H1 (cell line): ENCODE measurements at regions of chr9 and their contacts with region 1.

Region 1: DNA sequence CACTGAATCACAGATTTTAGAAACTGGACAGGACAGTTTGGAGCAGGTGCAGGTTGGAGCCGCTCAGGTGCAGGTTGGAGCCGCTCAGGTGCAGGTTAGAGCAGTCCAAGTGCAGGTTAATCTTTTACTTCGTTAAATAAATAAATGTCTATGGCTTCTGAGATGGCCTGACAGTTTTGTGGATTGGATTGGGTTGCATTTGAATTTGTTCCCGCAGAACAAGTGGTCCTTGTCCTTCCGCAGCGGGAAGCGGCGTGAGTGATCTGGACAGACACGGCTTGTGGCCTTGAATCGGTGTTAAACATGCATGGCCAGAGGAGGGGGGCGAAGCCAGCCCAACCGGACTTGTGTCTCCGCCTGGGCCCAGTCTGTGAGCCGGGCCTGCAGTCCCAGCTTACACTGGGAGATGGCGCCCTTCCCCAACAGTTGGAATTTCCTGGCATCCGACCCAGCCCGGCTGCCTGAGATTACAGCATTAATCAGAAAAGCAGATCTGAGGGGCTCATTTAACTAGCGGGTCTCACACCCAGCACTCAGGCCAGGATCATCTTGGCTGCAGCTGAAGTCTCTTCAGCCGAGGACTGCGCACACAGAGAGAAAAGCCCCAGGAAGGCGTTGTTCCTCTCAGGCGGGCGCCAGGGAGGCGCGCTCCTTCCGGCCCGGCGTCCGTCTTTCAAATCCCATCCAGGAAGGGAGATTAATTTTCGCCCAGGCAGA is 1.5 kb upstream of the OLFM1 start:
- DNase-seq: peak; percentile 65 to 98
- H3K4me3 ChIP-seq: peak overlapping the region in 3 of 4 experiments; percentile 1 to 57 (median 3); a peak in 4 of 8 replicates
- H3K27ac ChIP-seq: no peak overlapping the region
- H3K4me1 ChIP-seq: peaks cover 0 to 23% (median 6%) of the 10 kb centered on the region in 4 experiments; a peak in 5 of 7 replicates
- H3K27me3 ChIP-seq: peaks cover 0 to 17% (median 12%) of the 10 kb centered on the region in 4 experiments; a peak in 5 of 7 replicates
- CTCF ChIP-seq: peak; percentile 93 to 98 (median 97)
- EP300 ChIP-seq: 0 out of 3 replicates have a peak, but pooled peaks of 1 of the 2 experiments have one; percentile 27
- POLR2A ChIP-seq: no peak
- RAD21 ChIP-seq: peak; percentile 99 to 100

Region 2: DNA sequence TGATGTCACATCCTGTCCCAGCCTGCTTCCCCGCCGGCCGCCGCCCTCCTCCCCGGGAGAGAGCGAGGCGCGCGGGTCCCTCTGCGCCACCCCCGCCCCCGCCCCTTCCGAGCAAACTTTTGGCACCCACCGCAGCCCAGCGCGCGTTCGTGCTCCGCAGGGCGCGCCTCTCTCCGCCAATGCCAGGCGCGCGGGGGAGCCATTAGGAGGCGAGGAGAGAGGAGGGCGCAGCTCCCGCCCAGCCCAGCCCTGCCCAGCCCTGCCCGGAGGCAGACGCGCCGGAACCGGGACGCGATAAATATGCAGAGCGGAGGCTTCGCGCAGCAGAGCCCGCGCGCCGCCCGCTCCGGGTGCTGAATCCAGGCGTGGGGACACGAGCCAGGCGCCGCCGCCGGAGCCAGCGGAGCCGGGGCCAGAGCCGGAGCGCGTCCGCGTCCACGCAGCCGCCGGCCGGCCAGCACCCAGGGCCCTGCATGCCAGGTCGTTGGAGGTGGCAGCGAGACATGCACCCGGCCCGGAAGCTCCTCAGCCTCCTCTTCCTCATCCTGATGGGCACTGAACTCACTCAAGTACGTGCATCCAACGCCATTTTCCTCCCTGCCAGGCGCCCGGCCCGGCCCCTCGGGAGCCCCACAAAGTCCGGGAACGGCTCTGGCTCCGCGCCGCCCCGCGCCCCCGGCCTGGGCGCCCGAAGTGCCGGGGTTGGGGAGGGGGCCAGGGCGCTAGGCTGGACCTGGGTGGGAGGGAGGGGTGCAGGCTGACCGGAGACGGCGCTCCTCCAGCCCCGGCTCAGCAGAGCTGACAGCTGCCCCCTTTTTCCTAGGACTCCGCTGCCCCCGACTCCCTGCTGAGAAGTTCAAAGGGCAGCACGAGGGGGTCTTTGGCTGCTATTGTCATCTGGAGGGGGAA is 10.5 kb before region 1 on chr9:
- CTCF ChIA-PET with region 1: interaction called, 16 read pairs
- POLR2A ChIA-PET with region 1: no interaction called
- DNase-seq: peak in 1 of 2 experiments; percentile 68
- H3K4me3 ChIP-seq: peak overlapping the region; percentile 52 to 85 (median 54)
- H3K27ac ChIP-seq: no peak overlapping the region
- H3K4me1 ChIP-seq: peaks cover 0 to 10% (median 8%) of the 10 kb centered on the region in 4 experiments; a peak in 6 of 7 replicates
- H3K27me3 ChIP-seq: peaks cover 0 to 20% (median 17%) of the 10 kb centered on the region in 4 experiments; a peak in 6 of 7 replicates
- CTCF ChIP-seq: no peak
- EP300 ChIP-seq: no peak
- POLR2A ChIP-seq: no peak
- RAD21 ChIP-seq: no peak

Region 3: DNA sequence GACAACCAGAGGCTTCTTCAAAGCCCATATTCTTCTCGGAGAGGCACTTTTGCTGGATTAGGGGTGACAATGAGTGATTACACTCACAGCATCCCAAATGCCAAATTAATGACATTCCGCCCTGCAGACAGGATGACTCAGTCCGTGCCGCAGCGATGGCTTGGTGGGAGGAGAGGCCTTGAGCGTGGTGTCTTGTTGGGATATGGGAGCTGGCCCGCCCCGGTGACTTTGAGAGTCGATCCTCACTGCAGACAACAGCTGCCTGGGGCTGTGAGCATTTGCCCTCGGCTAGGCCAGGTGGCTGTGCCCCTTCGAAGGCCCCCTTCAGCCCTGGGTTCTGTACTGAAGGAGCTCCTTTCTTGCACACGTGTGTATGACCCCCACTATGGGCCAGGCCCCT is 31.3 kb after region 1 on chr9:
- CTCF ChIA-PET with region 1: no interaction called
- POLR2A ChIA-PET with region 1: no interaction called
- DNase-seq: no peak
- H3K4me3 ChIP-seq: no peak overlapping the region
- H3K27ac ChIP-seq: no peak overlapping the region
- H3K4me1 ChIP-seq: no peaks in the 10 kb centered on the region
- H3K27me3 ChIP-seq: no peaks in the 10 kb centered on the region
- CTCF ChIP-seq: no peak
- EP300 ChIP-seq: no peak
- POLR2A ChIP-seq: no peak
- RAD21 ChIP-seq: no peak

Region 4: GRCh38 chr9:135343837-135344522 is 258.0 kb after region 1 on chr9:
- CTCF ChIA-PET with region 1: interaction called, 17 read pairs
- POLR2A ChIA-PET with region 1: no interaction called
- DNase-seq: peak; percentile 39 to 96
- H3K4me3 ChIP-seq: no peak overlapping the region
- H3K27ac ChIP-seq: no peak overlapping the region
- H3K4me1 ChIP-seq: peaks cover 2 to 29% (median 20%) of the 10 kb centered on the region in 4 experiments
- H3K27me3 ChIP-seq: no peaks in the 10 kb centered on the region
- CTCF ChIP-seq: peak in 2 of 3 experiments; percentile 98; a peak in 3 of 4 replicates
- EP300 ChIP-seq: no peak
- POLR2A ChIP-seq: no peak
- RAD21 ChIP-seq: peak; percentile 94 to 98